ENCODE measurements at regions of chr5 and their contacts with region 1.

Region 1: DNA sequence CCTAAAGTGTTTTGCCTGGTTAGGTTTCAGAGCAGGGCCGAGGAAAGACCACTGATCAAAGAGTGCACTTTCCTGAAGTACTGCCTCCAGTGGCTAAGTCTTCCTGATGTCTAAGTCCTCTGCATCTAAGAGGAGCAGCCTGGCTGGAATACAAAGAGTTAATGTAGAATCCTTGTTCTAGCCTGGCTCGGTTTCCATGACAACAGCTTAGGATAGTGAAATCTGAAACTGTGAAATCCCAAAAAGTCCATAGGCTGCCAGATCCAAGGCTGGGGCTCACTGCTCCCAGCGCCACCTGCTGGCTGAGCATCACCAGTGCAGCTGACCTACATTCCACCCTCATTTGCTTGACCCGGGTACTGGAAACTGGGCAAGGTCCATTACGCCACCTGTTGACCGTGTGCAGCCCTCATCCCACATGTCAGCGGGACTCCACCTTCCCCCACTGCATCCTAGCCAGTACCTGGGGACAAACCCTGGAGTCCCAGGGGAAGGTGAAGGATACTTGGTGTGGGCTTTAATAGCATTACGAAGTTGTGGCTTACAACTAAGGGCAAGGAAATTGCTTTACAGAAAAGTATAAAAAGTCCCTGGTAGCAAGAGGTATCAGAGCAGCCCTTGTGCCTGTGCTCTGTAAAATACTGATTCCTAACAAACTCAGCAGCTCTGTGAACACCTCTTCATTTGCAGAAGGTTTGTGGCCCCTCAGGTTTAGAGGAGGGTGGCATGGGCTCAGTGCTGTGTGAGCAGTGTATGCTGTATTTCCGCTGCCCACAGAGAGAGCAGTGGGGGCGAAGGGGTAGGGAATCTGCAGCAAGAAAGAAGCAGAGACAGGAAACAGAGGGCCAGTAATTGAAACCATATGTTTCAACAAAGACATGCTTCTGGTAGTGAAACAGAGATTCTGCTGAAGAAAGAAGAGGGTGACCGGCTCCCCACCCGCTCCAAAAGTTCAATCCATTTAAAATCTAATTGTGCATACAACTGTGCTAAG is 36.0 kb downstream of the PCDHGC5 start:
- H3K4me3 Mint-ChIP-seq: no peak overlapping the region
- H3K27ac Mint-ChIP-seq: no peak overlapping the region
- H3K4me1 Mint-ChIP-seq: peaks cover 35% of the 10 kb centered on the region
- H3K27me3 Mint-ChIP-seq: no peaks in the 10 kb centered on the region

Region 2: GRCh38 chr5:141382469-141383294 is 142.2 kb before region 1 on chr5 and contains the start of gene PCDHGA7:
- intact Hi-C with region 1: no loop called
- H3K4me3 Mint-ChIP-seq: peak within 1 kb of the TSS; percentile 71
- H3K27ac Mint-ChIP-seq: no peak within 1 kb of the TSS
- H3K4me1 Mint-ChIP-seq: no peaks in the 10 kb centered on the region
- H3K27me3 Mint-ChIP-seq: peaks cover 62% of the 10 kb centered on the region

Region 3: DNA sequence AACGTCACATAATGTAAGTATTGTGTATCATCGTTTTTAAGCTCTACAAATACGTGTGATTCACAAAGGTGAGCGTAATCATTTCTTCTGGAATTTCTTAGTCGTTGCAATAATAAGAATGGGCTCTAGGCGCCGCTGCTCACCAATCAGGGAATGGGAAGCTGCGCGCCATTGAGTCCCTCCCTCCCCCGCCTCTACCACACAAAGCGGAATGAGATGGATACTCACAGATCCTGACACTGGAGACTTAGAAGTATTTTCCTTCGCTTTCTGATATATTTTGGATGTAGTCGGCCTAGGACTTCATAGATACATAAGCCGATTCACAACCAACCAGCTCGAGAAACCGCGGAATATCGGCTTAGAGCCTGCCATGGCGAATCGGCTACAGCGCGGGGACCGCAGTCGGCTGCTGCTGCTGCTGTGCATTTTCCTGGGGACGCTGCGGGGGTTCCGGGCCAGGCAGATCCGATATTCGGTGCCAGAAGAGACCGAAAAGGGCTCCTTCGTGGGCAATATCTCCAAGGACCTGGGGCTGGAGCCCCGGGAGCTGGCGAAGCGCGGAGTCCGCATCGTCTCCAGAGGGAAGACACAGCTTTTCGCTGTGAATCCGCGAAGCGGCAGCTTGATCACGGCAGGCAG is 103.9 kb before region 1 on chr5 and contains the start of gene PCDHGA11:
- intact Hi-C with region 1: loop called (anchors 2 kb)
- H3K4me3 Mint-ChIP-seq: peak within 1 kb of the TSS; percentile 78
- H3K27ac Mint-ChIP-seq: no peak within 1 kb of the TSS
- H3K4me1 Mint-ChIP-seq: peaks cover 23% of the 10 kb centered on the region
- H3K27me3 Mint-ChIP-seq: peaks cover 80% of the 10 kb centered on the region

Region 4: GRCh38 chr5:141557681-141558136 is 32.8 kb after region 1 on chr5:
- intact Hi-C with region 1: loop called (anchors 5 kb)
- H3K4me3 Mint-ChIP-seq: no peak overlapping the region
- H3K27ac Mint-ChIP-seq: no peak overlapping the region
- H3K4me1 Mint-ChIP-seq: peaks cover 10% of the 10 kb centered on the region
- H3K27me3 Mint-ChIP-seq: no peaks in the 10 kb centered on the region

Measured in dendritic cell treated with granulocyte-macrophage colony-stimulating factor and Interleukin-4, amounts not matched to agents 40 ng/mL and 50 ng/mL, for 4 days (primary cell).